Cardiac septum (tissue), 1 donor: ENCODE measurements at regions of chr9 and their contacts with region 1.

Region 1: DNA sequence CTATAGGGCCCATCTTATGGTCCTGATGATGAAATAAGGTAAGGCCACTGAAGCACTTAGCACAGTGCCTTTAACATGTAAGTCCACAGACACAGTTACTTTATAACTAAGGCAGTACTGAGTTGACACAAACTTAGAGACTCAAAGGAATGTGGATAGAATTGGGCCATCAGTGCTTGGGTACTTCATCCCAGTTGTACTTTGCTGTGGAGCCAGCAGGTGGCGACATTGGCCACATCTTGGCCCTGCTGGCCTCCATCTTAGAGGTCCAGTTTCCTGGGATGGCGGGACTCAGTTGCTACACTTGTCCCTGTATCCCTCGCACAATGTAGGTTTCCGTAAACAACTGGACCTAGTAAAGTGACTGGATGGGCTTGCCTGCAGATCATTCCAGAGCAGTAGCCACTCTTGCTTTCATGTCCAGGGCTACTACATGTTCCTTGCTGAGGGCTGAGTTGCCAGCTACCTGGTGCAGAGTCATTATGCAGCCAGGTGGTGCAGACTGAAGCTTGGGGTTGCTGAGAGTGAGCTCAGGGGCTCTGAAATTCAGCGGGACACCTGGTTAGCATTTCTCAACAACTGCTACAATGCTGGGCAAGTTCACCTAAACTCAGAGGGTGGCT is 10.6 kb downstream of the MTAP start:
- DNase-seq: peak; percentile 83

Region 2: DNA sequence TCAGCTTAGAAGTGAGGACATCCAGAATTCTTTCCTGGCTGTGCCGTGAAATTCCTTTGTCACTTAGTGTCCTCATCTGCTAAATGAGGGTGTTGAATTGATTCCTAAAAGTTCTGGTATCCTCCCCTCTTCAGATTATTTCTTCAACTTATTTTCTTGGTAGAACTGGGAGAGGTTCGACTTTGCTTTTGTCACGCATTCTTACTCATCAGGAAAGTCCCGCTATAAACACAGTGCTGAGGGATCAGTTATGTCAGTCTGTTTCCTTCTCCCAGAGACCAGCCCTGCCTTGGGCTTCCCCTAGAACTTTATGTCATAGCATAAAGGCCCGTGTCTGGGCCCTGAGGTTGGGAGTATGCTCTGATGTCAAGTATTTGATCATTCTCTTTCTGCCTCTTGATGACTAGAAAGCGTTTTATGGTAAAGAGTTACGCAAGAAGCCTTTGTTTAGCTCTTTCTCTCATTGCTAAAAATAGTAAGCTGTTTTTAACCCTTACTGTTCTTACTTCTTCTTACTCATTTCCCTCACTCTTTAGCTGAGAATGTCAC is 19.0 kb after region 1 on chr9:
- intact Hi-C with region 1: no loop called
- DNase-seq: no peak

Region 3: DNA sequence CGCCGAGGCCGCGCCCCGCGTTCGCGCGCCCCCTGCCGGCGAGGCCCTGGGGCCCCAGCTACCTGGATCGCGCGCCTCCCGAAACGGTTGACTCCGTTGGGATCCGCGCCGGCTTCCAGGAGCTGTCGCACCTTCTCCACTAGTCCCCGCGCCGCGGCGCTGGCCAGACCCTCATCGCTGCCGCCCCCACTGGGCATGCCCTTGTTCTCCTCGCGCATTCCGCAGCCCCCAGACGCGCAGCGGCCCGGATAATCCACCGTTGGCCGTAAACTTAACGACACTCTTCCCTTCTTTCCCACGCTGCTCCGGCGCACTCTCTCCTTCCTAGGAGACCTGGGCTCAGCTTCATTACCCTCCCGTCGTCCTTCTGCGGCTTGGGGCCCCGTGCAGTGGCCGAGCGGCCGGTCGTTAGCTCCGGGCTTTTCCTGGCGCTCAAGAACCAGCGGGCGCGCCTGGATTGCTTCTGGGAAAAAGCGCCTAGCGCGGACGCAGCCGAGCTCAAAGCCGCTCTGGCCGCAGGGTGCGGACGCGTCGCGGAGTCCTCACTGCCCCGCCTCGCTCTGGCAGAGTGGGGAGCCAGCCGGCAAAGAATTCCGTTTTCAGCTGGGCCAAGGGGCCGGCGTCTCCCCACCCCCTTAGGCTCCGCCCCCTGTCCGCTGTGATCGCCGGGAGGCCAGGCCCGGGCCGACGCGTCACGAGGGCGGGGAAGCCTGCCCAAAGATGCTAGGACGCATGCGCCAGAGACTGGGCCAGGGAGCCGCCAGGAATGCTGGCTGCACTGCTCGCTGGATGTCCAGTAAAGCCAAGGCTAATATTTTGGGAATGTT is 195.9 kb after region 1 on chr9 and contains the start of gene CDKN2B:
- intact Hi-C with region 1: loop called (anchors 5 kb)
- DNase-seq: peak; percentile 97
- total RNA-seq, gene CDKN2B: 3.6 TPM

Region 4: GRCh38 chr9:22037954-22038690 is 225.1 kb after region 1 on chr9:
- intact Hi-C with region 1: loop called (anchors 10 kb)
- DNase-seq: no peak

Region 5: GRCh38 chr9:22119537-22120158 is 306.6 kb after region 1 on chr9:
- intact Hi-C with region 1: loop called (anchors 5 kb)
- DNase-seq: no peak

Region 6: DNA sequence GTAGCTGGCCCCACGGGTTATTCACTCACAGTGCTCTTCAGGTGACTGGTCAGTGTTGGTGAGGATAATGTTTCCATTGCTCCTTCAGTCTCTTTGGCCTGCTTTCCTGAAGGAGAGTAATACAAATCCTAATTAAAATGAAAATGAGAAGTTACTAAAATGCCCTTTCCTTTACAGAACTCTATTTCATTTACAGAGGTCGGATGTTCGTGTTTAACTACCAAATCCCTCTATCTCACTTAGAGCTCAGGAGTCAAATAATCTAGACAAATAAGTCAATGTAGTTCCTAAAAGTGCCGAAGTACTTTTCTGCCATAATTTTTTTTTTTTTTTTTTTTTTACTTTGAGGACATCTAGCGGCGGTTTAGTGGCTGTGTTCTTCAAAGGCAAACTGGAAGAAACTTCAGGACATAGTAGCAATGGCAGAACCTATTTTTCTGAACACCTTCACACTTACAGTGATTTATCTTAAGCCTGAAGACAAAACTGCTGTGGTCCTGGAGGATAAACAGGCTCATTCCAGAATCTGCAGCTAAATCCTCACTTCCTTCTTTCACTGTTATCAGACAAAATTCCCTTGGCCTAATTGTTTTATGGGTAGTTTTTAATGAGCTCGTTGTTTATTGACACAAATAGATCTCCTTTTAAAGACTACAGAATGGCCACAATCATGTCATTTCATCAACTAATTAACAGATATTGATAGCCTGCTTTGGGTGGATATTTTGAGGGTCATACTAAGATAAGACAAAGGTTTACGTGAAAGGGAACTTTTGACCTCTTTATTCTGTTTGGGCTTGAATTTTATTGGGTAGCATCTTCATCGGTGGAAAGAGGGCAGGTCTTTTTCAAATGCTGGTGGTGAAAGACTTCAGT is 426.0 kb after region 1 on chr9:
- intact Hi-C with region 1: loop called (anchors 5 kb)
- DNase-seq: no peak

Region 7: DNA sequence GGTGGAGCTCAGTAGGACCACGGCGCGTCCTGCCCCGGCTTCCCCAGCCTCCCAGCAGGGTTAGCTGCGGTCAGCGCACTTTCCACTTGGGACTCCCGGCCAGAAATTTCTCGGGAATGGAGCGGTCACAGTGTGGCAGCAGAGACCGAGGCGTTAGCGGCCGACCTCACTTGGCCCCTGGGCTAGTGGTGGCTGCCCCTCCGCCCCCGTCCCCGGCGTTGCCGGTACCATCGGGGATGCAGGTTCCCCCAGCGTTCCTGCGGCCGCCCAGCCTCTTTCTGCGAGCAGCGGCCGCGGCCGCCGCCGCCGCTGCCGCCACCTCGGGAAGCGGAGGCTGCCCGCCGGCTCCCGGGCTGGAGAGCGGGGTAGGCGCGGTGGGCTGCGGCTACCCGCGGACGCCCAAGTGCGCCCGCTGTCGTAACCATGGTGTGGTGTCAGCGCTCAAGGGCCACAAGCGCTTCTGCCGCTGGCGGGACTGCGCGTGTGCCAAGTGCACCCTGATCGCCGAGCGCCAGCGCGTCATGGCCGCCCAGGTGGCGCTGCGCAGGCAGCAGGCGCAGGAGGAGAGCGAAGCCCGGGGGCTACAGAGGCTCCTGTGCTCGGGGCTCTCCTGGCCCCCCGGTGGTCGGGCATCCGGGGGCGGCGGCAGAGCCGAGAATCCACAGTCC is 634.0 kb after region 1 on chr9:
- intact Hi-C with region 1: loop called (anchors 5 kb)
- DNase-seq: no peak